CD8-positive, alpha-beta T cell (primary cell): ENCODE measurements at regions of chr5 and their contacts with region 1.

Region 1: DNA sequence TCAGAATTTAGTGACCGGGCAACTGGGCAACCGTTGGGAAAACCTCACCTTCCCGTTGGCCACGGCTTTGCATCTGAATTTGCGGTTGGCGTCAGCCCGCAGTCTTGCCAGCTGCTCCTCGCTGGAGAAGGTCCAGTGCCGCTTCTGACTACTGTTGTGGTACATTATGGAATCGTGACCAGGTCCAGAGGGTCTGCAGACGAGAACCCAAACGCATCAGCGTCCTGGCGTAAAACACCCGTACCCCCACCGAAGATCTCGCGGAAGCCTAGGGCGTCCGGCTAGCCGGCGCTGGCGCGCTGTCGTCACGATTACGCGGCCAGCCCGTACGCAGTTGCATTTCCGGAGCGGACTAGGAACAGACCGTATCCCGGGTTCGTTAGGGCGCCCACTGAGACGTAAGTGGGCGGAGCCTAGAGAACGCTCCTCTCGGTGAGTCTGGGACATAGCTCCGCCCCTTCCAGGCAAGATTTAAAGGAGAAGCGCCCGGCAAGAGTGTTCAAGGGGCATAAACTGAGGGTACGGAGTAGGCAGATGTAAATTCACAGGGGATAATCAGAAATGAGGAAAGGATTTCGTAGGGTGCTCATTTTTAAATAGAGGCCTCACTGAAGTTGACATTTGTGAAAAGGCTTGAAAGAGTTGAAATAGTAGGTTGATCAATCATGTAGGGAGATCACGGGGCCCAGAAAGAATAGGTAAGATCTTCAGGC is at the start of gene CCNH:
- DNase-seq: peak; percentile 92 to 99 (median 96)
- ATAC-seq: peak; percentile 97
- H3K4me3 ChIP-seq: peak within 1 kb of the TSS; percentile 88 to 97
- H3K4me3 Mint-ChIP-seq: peak within 1 kb of the TSS; percentile 93
- H3K27ac ChIP-seq: peak within 1 kb of the TSS; percentile 98 to 99
- H3K27ac Mint-ChIP-seq: peak within 1 kb of the TSS; percentile 93
- H3K4me1 ChIP-seq: peaks cover 29% of the 10 kb centered on the region
- H3K4me1 Mint-ChIP-seq: peaks cover 49% of the 10 kb centered on the region
- H3K27me3 ChIP-seq: no peaks in the 10 kb centered on the region
- H3K27me3 Mint-ChIP-seq: no peaks in the 10 kb centered on the region
- CTCF ChIP-seq: no peak
- total RNA-seq, gene CCNH: 275 to 279 TPM

Region 2: GRCh38 chr5:86617756-86618576 is 794.8 kb before region 1 on chr5 and contains the start of gene COX7C:
- CTCF ChIA-PET with region 1: no interaction called
- POLR2A ChIA-PET with region 1: interaction called, 3 read pairs
- intact Hi-C with region 1: loop called (anchors 1 to 5 kb)
- DNase-seq: peak; percentile 84 to 98 (median 91)
- ATAC-seq: peak; percentile 92
- H3K4me3 ChIP-seq: peak within 1 kb of the TSS; percentile 69 to 97
- H3K4me3 Mint-ChIP-seq: peak within 1 kb of the TSS; percentile 100
- H3K27ac ChIP-seq: peak within 1 kb of the TSS; percentile 89 to 96
- H3K27ac Mint-ChIP-seq: peak within 1 kb of the TSS; percentile 100
- H3K4me1 ChIP-seq: peaks cover 15% of the 10 kb centered on the region
- H3K4me1 Mint-ChIP-seq: peaks cover 28% of the 10 kb centered on the region
- H3K27me3 ChIP-seq: no peaks in the 10 kb centered on the region
- H3K27me3 Mint-ChIP-seq: peaks cover 10% of the 10 kb centered on the region
- CTCF ChIP-seq: no peak
- total RNA-seq, gene COX7C: 432 to 495 TPM

Region 3: DNA sequence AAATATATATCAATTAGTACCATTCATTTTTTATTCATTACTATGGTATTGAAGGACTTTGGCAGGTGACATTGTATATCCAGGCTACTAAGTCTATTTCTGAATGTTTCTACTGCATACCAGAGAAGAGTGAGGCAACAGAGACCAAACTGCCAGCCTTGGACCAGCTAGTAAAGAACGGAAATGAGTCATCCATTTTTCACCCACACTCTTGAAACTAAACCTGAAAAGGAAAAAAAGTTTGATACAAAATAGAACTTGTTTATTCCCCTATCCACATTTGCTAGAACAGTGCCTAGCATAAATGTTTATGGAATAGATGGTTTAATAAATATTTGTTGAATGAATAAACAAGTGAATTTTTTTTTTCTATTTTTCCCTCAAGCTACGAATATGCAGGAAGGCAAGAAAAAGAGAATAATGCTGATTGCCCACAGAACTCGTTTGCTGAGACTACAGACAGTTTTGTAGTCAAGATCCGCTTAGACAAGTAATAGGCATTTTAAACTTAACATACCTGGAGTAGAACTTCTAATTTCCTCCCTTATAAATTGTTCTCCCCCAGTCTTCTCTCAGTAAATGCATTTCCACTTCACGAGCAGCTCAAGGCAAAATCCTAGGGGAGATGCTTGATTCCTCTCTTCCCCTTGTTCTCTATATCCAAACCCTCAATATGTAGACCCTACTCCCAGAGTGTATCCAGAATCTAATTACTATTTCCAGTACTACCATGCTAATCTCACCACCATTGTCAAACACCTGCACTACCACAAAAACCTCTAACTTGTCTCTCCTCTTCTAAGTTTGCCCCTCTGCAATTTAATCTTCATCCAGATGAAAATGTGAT is 291.3 kb before region 1 on chr5:
- CTCF ChIA-PET with region 1: no interaction called
- POLR2A ChIA-PET with region 1: no interaction called
- intact Hi-C with region 1: loop called in 1 of 2 experiments (anchors 5 kb)
- DNase-seq: peak; percentile 0 to 79 (median 30)
- ATAC-seq: peak; percentile 76
- H3K4me3 ChIP-seq: no peak overlapping the region
- H3K4me3 Mint-ChIP-seq: peak overlapping the region; percentile 38
- H3K27ac ChIP-seq: peak overlapping the region; percentile 2 to 74
- H3K27ac Mint-ChIP-seq: peak overlapping the region; percentile 78
- H3K4me1 ChIP-seq: peaks cover 28% of the 10 kb centered on the region
- H3K4me1 Mint-ChIP-seq: peaks cover 44% of the 10 kb centered on the region
- H3K27me3 ChIP-seq: no peaks in the 10 kb centered on the region
- H3K27me3 Mint-ChIP-seq: no peaks in the 10 kb centered on the region
- CTCF ChIP-seq: no peak

Region 4: GRCh38 chr5:87393331-87393730 is 19.5 kb before region 1 on chr5:
- CTCF ChIA-PET with region 1: no interaction called
- POLR2A ChIA-PET with region 1: interaction called, 3 read pairs
- intact Hi-C with region 1: loop called in 1 of 2 experiments (anchors 1 kb)
- DNase-seq: no peak
- ATAC-seq: no peak
- H3K4me3 ChIP-seq: no peak overlapping the region
- H3K4me3 Mint-ChIP-seq: no peak overlapping the region
- H3K27ac ChIP-seq: no peak overlapping the region
- H3K27ac Mint-ChIP-seq: no peak overlapping the region
- H3K4me1 ChIP-seq: no peaks in the 10 kb centered on the region
- H3K4me1 Mint-ChIP-seq: peaks cover 29% of the 10 kb centered on the region
- H3K27me3 ChIP-seq: no peaks in the 10 kb centered on the region
- H3K27me3 Mint-ChIP-seq: no peaks in the 10 kb centered on the region
- CTCF ChIP-seq: no peak

Region 5: GRCh38 chr5:88268385-88269184 is 855.8 kb after region 1 on chr5 and contains the start of gene TMEM161B:
- CTCF ChIA-PET with region 1: no interaction called
- POLR2A ChIA-PET with region 1: no interaction called
- intact Hi-C with region 1: loop called (anchors 2 kb)
- DNase-seq: peak; percentile 91 to 99 (median 95)
- ATAC-seq: peak; percentile 96
- H3K4me3 ChIP-seq: peak within 1 kb of the TSS; percentile 76 to 94
- H3K4me3 Mint-ChIP-seq: peak within 1 kb of the TSS; percentile 99
- H3K27ac ChIP-seq: peak within 1 kb of the TSS; percentile 89 to 96
- H3K27ac Mint-ChIP-seq: peak within 1 kb of the TSS; percentile 100
- H3K4me1 ChIP-seq: peaks cover 25% of the 10 kb centered on the region
- H3K4me1 Mint-ChIP-seq: peaks cover 74% of the 10 kb centered on the region
- H3K27me3 ChIP-seq: no peaks in the 10 kb centered on the region
- H3K27me3 Mint-ChIP-seq: no peaks in the 10 kb centered on the region
- CTCF ChIP-seq: no peak
- total RNA-seq, gene TMEM161B: 18.9 to 20.8 TPM